Naive thymus-derived CD4-positive, alpha-beta T cell (primary cell): ENCODE measurements at regions of chr11 and their contacts with region 1.

Region 1: DNA sequence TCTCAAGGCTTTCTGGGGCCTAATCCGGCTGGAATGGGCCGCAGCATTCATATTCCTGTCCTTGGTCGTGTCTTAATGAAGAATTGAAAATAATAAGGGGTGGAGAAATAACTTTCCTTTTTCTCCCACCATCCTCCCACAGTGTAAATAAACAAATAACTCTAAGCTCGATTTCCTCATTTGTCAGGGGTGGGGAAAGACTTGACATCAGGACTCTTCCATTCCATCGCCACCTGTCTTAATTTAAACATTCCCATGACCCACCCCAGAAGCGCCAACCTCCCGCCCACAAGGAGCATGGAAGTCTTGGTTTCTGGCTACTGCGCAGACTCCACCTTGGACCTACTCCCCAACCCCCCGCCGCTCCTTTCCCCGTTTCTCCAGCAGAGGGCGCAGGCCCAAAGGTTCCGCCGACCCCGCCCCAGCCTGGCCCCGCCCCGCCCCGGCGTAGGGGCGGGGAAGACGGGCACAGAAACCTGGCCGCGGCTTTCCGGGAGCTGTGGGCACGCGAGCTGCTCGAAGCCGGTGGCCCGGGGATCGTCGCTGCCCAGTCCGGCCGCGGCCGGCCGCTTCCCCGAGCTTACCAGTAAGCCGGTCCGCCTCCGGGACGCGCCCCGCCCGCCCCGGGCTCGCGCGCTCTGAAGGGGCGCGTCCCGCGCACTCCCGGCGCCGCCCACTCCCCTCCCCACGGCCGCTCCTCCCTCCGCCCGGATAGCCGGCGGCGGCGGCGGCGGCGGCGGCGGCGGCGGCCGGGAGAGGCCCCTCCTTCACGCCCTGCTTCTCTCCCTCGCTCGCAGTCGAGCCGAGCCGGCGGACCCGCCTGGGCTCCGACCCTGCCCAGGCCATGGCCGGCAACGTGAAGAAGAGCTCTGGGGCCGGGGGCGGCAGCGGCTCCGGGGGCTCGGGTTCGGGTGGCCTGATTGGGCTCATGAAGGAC is at the start of gene CBL:
- DNase-seq: peak; percentile 83 to 99 (median 93)
- ATAC-seq: peak; percentile 97
- H3K4me3 ChIP-seq: peak within 1 kb of the TSS; percentile 88
- H3K4me3 Mint-ChIP-seq: peak within 1 kb of the TSS; percentile 88 to 100 (median 98)
- H3K27ac ChIP-seq: peak within 1 kb of the TSS; percentile 91
- H3K27ac Mint-ChIP-seq: peak within 1 kb of the TSS; percentile 86 to 98 (median 94)
- H3K4me1 ChIP-seq: peaks cover 7 to 23% of the 10 kb centered on the region in 2 donors
- H3K4me1 Mint-ChIP-seq: peaks cover 18 to 49% (median 41%) of the 10 kb centered on the region in 7 donors
- H3K27me3 ChIP-seq: no peaks in the 10 kb centered on the region
- H3K27me3 Mint-ChIP-seq: peaks cover 0 to 3% (median 0%) of the 10 kb centered on the region in 5 donors
- total RNA-seq, gene CBL: 37.0 to 51.8 (median 40.5) TPM

Region 2: DNA sequence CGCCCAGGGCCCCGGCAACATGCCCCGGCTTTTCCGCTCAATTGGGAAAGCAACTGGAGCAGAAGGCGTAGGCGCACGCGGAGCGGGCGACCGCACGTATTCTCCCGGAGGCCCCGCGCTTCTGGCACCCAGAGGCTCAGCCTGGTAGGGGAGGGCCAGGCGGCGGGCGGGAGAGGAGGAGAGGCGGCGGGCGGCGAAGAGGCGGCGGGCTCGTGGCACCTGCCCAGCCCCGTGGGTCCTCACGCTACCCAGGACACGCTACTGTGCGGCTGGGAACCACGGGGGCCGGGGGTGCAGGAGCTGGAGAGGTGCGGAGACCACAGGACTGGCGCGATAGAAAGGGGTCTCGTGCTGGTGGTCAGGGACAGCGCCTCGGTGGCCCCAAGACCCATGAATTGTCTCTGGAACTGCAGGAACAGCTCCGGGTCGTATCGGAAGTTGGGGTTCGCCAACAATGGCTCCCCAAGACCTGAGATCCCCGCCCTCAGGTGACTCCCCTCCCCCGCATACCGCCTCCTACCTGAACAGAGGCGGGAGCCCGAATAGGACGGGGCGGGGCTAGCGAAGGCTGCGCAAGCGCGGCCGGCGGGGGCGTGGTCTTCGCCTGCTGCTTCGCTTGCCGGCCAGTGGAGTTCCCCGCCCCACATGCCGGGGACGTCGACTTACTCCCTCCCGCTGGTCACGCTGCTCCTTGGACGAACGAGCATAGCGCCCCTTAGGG is 175.4 kb before region 1 on chr11 and contains the start of gene SLC37A4:
- CTCF ChIA-PET with region 1: no interaction called
- POLR2A ChIA-PET with region 1: no interaction called
- intact Hi-C with region 1: loop called in 1 of 2 experiments (anchors 1 kb)
- DNase-seq: peak; percentile 96 to 100 (median 98)
- ATAC-seq: peak; percentile 97
- H3K4me3 ChIP-seq: peak within 1 kb of the TSS; percentile 91
- H3K4me3 Mint-ChIP-seq: peak within 1 kb of the TSS; percentile 62 to 93 (median 82)
- H3K27ac ChIP-seq: peak within 1 kb of the TSS; percentile 79
- H3K27ac Mint-ChIP-seq: peak within 1 kb of the TSS; percentile 59 to 93 (median 81)
- H3K4me1 ChIP-seq: peaks cover 0 to 10% of the 10 kb centered on the region in 2 donors
- H3K4me1 Mint-ChIP-seq: peaks cover 12 to 24% (median 17%) of the 10 kb centered on the region in 7 donors
- H3K27me3 ChIP-seq: no peaks in the 10 kb centered on the region
- H3K27me3 Mint-ChIP-seq: no peaks in the 10 kb centered on the region
- total RNA-seq, gene SLC37A4: 7.1 to 20.8 (median 14.6) TPM

Region 3: DNA sequence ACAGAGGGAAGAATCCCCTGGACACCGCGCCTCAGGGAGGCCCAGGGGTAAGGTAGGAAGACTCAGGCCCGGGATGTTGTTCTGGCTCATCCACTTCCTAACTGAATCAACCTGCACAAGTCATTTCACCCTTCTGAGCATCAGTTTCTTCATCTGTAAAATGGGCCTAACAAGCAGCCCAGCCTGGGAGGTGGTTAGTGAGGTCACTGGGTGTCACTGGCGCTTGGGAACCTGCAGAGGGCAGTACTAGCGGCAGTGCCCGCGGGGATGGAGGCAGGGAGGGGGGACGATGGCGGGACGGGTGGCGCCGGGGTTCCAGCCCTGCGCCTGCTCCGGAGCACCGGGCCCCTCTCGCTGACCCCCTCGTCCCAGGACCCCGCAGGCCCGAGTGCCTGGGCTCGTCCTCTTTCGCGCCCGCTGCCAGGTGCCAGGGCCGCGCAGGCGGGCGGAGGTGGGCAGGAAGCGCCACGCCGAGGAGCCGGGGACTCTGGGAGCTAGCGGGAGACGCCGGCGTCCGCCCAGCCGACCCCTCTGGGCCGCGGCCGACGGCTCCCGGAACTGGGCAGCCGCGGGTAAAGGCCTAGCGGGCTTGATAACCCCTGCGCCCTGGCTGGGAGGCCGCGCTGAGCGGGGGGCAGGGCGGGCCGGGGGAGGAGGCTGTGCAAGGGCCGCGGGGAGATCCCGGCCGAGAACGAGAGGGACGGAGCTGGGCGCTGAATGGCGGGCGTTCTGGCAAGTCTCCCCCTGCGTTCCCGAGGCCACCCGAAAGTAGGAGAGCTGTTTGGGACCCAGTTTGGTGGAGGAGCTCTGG is 37.2 kb before region 1 on chr11 and contains the start of gene NLRX1:
- CTCF ChIA-PET with region 1: interaction called, 3 read pairs
- POLR2A ChIA-PET with region 1: no interaction called
- intact Hi-C with region 1: loop called in 1 of 2 experiments (anchors 2 kb)
- DNase-seq: peak; percentile 67 to 85 (median 82)
- ATAC-seq: peak; percentile 98
- H3K4me3 ChIP-seq: peak within 1 kb of the TSS; percentile 75
- H3K4me3 Mint-ChIP-seq: peak within 1 kb of the TSS; percentile 86 to 94 (median 90)
- H3K27ac ChIP-seq: peak within 1 kb of the TSS; percentile 73
- H3K27ac Mint-ChIP-seq: peak within 1 kb of the TSS; percentile 64 to 95 (median 87)
- H3K4me1 ChIP-seq: peaks cover 0 to 4% of the 10 kb centered on the region in 2 donors
- H3K4me1 Mint-ChIP-seq: peaks cover 4 to 25% (median 11%) of the 10 kb centered on the region in 7 donors
- H3K27me3 ChIP-seq: no peaks in the 10 kb centered on the region
- H3K27me3 Mint-ChIP-seq: no peaks in the 10 kb centered on the region
- total RNA-seq, gene NLRX1: 8.3 to 19.5 (median 9.8) TPM

Region 4: DNA sequence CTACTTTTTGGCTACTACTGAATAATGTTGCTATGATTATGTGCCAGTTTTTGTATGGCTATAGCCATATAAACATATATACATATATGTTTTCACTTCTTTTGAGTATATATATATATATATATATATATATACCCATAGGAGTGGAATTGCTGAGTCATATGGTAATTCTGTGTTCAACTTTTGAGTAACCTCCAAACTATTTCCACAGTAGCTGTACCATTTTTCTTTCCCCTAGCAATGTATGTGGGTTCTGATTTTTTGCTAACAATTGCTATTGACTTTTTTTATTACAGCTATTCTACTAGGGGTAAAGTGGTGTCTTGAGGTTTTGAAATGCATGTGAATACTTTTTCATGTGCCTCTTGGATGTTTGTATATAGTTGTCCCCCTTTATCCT is 30.6 kb after region 1 on chr11:
- CTCF ChIA-PET with region 1: interaction called, 4 read pairs
- POLR2A ChIA-PET with region 1: interaction called, 19 read pairs
- intact Hi-C with region 1: loop called (anchors 5 kb)
- DNase-seq: no peak
- ATAC-seq: no peak
- H3K4me3 ChIP-seq: no peak overlapping the region
- H3K4me3 Mint-ChIP-seq: no peak overlapping the region
- H3K27ac ChIP-seq: no peak overlapping the region
- H3K27ac Mint-ChIP-seq: peak overlapping the region in 5 of 9 donors; percentile 15 to 70 (median 26)
- H3K4me1 ChIP-seq: peaks cover 4 to 24% of the 10 kb centered on the region in 2 donors
- H3K4me1 Mint-ChIP-seq: peaks cover 29 to 74% (median 60%) of the 10 kb centered on the region in 7 donors
- H3K27me3 ChIP-seq: no peaks in the 10 kb centered on the region
- H3K27me3 Mint-ChIP-seq: no peaks in the 10 kb centered on the region

Region 5: GRCh38 chr11:119273721-119274120 is 67.9 kb after region 1 on chr11:
- CTCF ChIA-PET with region 1: interaction called, 5 read pairs
- POLR2A ChIA-PET with region 1: interaction called, 11 read pairs
- intact Hi-C with region 1: no loop called
- DNase-seq: no peak
- ATAC-seq: no peak
- H3K4me3 ChIP-seq: no peak overlapping the region
- H3K4me3 Mint-ChIP-seq: no peak overlapping the region
- H3K27ac ChIP-seq: no peak overlapping the region
- H3K27ac Mint-ChIP-seq: peak overlapping the region in 5 of 9 donors; percentile 14 to 89 (median 41)
- H3K4me1 ChIP-seq: peaks cover 0 to 9% of the 10 kb centered on the region in 2 donors
- H3K4me1 Mint-ChIP-seq: peaks cover 3 to 55% (median 35%) of the 10 kb centered on the region in 7 donors
- H3K27me3 ChIP-seq: no peaks in the 10 kb centered on the region
- H3K27me3 Mint-ChIP-seq: no peaks in the 10 kb centered on the region

Region 6: DNA sequence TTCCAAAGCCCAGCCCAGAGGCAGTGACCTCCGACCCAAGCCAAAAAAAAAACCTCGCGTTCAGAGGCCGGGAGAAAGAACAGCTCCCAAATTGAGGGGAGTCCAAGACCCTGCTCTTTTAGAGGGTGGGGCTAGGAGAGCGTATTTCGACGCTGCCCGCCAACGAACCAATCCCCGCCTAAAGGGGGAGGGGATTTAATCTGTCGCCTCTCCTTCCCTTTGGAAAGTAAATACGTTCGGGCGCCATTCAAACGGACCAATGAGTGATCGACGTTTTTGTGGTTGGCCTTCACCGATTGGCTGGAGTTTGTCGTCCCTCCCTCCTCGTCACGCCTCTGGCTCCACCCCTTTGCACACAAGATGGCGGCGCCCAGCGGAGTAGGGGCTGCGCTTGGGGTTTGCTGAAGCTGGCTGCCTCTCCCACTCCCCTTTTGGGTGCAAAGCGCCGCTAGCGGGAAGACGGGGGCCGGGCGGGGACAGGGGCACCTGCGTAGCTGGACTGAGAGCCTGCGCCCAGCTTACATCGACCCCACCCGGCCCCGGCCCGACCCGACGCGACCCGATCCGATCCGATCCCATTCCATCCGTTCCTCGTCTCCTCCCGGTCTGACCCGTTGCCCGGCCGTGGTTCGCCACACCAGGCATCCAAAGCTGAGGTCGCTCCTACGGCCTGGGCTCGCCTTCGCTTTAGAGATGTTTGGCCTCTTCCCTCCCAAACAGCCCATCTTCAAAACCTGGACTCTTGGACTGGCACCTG is 128.5 kb after region 1 on chr11 and contains the start of gene RNF26:
- CTCF ChIA-PET with region 1: interaction called, 6 read pairs
- POLR2A ChIA-PET with region 1: interaction called, 4 read pairs
- intact Hi-C with region 1: loop called in 1 of 2 experiments (anchors 5 kb)
- DNase-seq: peak; percentile 82 to 96 (median 94)
- ATAC-seq: peak; percentile 98
- H3K4me3 ChIP-seq: peak within 1 kb of the TSS; percentile 60
- H3K4me3 Mint-ChIP-seq: peak within 1 kb of the TSS; percentile 88 to 99 (median 98)
- H3K27ac ChIP-seq: peak within 1 kb of the TSS; percentile 89
- H3K27ac Mint-ChIP-seq: peak within 1 kb of the TSS; percentile 91 to 99 (median 97)
- H3K4me1 ChIP-seq: peaks cover 10 to 12% of the 10 kb centered on the region in 2 donors
- H3K4me1 Mint-ChIP-seq: peaks cover 22 to 59% (median 41%) of the 10 kb centered on the region in 7 donors
- H3K27me3 ChIP-seq: peaks cover 4 to 9% of the 10 kb centered on the region in 2 donors
- H3K27me3 Mint-ChIP-seq: peaks cover 9 to 30% (median 19%) of the 10 kb centered on the region in 5 donors
- total RNA-seq, gene RNF26: 16.9 to 28.3 (median 18.9) TPM

Region 7: GRCh38 chr11:119363851-119364590 is 158.2 kb after region 1 on chr11:
- CTCF ChIA-PET with region 1: no interaction called
- POLR2A ChIA-PET with region 1: no interaction called
- intact Hi-C with region 1: no loop called
- DNase-seq: peak in 8 of 9 donors; percentile 31 to 80 (median 47)
- ATAC-seq: peak; percentile 91
- H3K4me3 ChIP-seq: no peak overlapping the region
- H3K4me3 Mint-ChIP-seq: peak overlapping the region; percentile 80 to 91 (median 82)
- H3K27ac ChIP-seq: no peak overlapping the region
- H3K27ac Mint-ChIP-seq: peak overlapping the region in 1 of 9 donors; percentile 17
- H3K4me1 ChIP-seq: no peaks in the 10 kb centered on the region
- H3K4me1 Mint-ChIP-seq: peaks cover 5 to 16% (median 11%) of the 10 kb centered on the region in 7 donors
- H3K27me3 ChIP-seq: peaks cover 5 to 22% of the 10 kb centered on the region in 2 donors
- H3K27me3 Mint-ChIP-seq: peaks cover 36 to 60% (median 46%) of the 10 kb centered on the region in 5 donors

Region 8: GRCh38 chr11:119550053-119550752 is 344.4 kb after region 1 on chr11:
- CTCF ChIA-PET with region 1: no interaction called
- POLR2A ChIA-PET with region 1: no interaction called
- intact Hi-C with region 1: no loop called
- DNase-seq: no peak
- ATAC-seq: no peak
- H3K4me3 ChIP-seq: no peak overlapping the region
- H3K4me3 Mint-ChIP-seq: no peak overlapping the region
- H3K27ac ChIP-seq: no peak overlapping the region
- H3K27ac Mint-ChIP-seq: no peak overlapping the region
- H3K4me1 ChIP-seq: no peaks in the 10 kb centered on the region
- H3K4me1 Mint-ChIP-seq: no peaks in the 10 kb centered on the region
- H3K27me3 ChIP-seq: no peaks in the 10 kb centered on the region
- H3K27me3 Mint-ChIP-seq: peaks cover 0 to 9% (median 4%) of the 10 kb centered on the region in 5 donors